PC-9 (cell line): ENCODE measurements at regions of chr10 and their contacts with region 1.

Region 1: DNA sequence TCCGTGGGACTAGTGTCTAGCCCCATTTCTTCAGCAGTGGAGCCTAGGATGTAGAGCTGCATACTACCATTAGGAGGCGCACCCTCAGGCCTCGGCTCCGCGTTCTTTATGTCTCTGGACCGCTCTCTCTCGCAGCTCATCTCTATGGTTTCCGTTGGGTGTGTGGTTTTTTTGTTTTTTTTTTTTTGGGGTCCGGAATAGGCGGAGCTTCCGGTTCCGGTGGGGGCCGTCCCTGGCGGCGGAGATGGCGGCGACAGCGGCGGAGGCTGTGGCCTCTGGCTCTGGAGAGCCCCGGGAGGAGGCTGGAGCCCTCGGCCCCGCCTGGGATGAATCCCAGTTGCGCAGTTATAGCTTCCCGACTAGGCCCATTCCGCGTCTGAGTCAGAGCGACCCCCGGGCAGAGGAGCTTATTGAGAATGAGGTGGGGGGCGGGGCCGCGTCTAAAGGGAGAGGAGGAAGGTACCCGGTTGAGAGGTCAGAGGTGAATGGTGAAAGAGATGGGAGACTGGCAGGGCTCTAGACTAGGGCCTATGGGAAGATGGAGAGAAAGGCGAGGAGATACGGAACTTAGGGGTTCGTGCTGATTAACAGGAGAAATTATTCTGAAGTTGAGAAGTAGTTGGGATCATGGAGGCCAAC is at the start of gene HIF1AN:
- DNase-seq: peak; percentile 78 to 82
- H3K4me3 ChIP-seq: peak within 1 kb of the TSS; percentile 74
- H3K27ac ChIP-seq: no peak within 1 kb of the TSS
- H3K4me1 ChIP-seq: peaks cover 5% of the 10 kb centered on the region; the same call in 1 of the 2 replicates
- H3K27me3 ChIP-seq: no peaks in the 10 kb centered on the region
- CTCF ChIP-seq: peak; percentile 79
- total RNA-seq, gene HIF1AN: 37.5 and 42.0 TPM in 2 replicates

Region 2: GRCh38 chr10:100518761-100519241 is 17.0 kb before region 1 on chr10:
- CTCF ChIA-PET with region 1: interaction called, 11 read pairs
- POLR2A ChIA-PET with region 1: interaction called, 10 read pairs
- intact Hi-C with region 1: no loop called
- DNase-seq: peak; percentile 42 to 44
- H3K4me3 ChIP-seq: no peak overlapping the region
- H3K27ac ChIP-seq: no peak overlapping the region
- H3K4me1 ChIP-seq: no peaks in the 10 kb centered on the region
- H3K27me3 ChIP-seq: no peaks in the 10 kb centered on the region
- CTCF ChIP-seq: peak; percentile 75

Region 3: GRCh38 chr10:100600218-100600617 is 64.4 kb after region 1 on chr10:
- CTCF ChIA-PET with region 1: no interaction called
- POLR2A ChIA-PET with region 1: no interaction called
- intact Hi-C with region 1: no loop called
- DNase-seq: no peak
- H3K4me3 ChIP-seq: no peak overlapping the region
- H3K27ac ChIP-seq: no peak overlapping the region
- H3K4me1 ChIP-seq: no peaks in the 10 kb centered on the region
- H3K27me3 ChIP-seq: peaks cover 54% of the 10 kb centered on the region
- CTCF ChIP-seq: no peak

Region 4: GRCh38 chr10:100912605-100913469 is 377.0 kb after region 1 on chr10 and contains the start of gene SLF2:
- CTCF ChIA-PET with region 1: no interaction called
- POLR2A ChIA-PET with region 1: interaction called, 11 read pairs
- intact Hi-C with region 1: no loop called
- DNase-seq: peak; percentile 89 to 91
- H3K4me3 ChIP-seq: peak within 1 kb of the TSS; percentile 89
- H3K27ac ChIP-seq: no peak within 1 kb of the TSS
- H3K4me1 ChIP-seq: peaks cover 12% of the 10 kb centered on the region
- H3K27me3 ChIP-seq: no peaks in the 10 kb centered on the region
- CTCF ChIP-seq: no peak
- total RNA-seq, gene SLF2: 13.6 and 17.1 TPM in 2 replicates